CD4-positive, alpha-beta memory T cell (primary cell): ENCODE measurements at regions of chr19 and their contacts with region 1.

Region 1: DNA sequence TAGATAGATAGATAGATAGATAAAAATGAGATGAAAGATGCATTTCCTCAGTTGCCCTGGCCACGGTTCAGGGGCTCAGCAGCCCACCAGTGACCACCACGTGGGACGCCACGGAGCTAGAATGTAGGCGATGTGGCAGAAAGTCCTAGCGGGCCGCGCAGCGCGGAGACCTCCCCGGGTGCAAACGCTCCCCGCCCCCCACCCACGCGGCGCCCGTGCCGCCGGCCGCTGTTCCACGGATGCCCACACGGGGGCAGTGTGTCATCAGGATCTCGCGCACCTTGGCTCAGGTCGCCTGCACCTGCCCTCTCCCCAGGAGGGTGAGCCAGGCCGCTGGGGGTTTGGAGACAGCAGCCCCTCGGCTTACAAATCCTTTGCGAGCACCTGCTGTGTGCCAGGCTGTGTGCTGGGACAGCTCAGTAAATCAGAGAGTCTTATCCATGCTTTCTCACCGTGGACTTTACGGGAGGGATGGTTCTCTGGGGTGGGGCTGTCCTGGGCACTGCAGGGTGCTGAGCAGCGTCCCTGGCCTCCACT is 13.7 kb upstream of the TLE5 start:
- DNase-seq: peak; percentile 65 to 76 (median 66)
- H3K4me3 ChIP-seq: no peak overlapping the region
- H3K4me3 Mint-ChIP-seq: peak overlapping the region in 2 of 8 donors; percentile 41 to 58
- H3K27ac ChIP-seq: no peak overlapping the region
- H3K27ac Mint-ChIP-seq: peak overlapping the region in 2 of 7 donors; percentile 43 to 68
- H3K4me1 ChIP-seq: peaks cover 7% of the 10 kb centered on the region
- H3K4me1 Mint-ChIP-seq: peaks cover 0 to 10% (median 3%) of the 10 kb centered on the region in 4 donors
- H3K27me3 ChIP-seq: no peaks in the 10 kb centered on the region
- H3K27me3 Mint-ChIP-seq: no peaks in the 10 kb centered on the region

Region 2: DNA sequence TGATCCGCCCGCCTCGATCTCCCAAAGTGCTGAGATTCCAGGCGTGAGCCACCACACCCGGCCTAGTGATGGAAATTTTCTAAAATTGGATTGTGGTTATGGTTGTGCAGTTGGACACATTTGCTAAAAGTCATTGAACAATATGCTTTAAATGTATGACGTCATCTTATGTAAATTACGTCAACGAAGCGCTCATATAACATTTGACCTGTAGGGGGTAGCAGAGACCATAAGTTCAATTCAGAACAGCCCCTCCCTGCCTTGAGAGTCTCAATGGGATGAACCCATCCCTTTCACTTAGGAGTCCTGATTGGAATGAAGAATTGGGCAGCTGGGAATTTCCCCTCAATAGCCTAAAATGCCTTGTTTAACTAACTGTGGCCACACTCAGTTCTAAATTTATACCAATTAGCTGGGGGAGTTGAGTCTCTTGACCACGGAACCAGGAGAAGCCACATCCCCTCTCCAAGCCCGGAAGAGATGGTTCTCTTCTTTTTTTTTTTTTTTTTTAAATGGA is 113.9 kb before region 1 on chr19:
- CTCF ChIA-PET with region 1: interaction called, 9 read pairs
- POLR2A ChIA-PET with region 1: no interaction called
- intact Hi-C with region 1: loop called (anchors 1 kb)
- DNase-seq: peak; percentile 72 to 80 (median 77)
- H3K4me3 ChIP-seq: no peak overlapping the region
- H3K4me3 Mint-ChIP-seq: peak overlapping the region in 2 of 8 donors; percentile 16 to 17
- H3K27ac ChIP-seq: no peak overlapping the region
- H3K27ac Mint-ChIP-seq: peak overlapping the region; percentile 48 to 92 (median 85)
- H3K4me1 ChIP-seq: no peaks in the 10 kb centered on the region
- H3K4me1 Mint-ChIP-seq: peaks cover 4 to 6% (median 5%) of the 10 kb centered on the region in 4 donors
- H3K27me3 ChIP-seq: no peaks in the 10 kb centered on the region
- H3K27me3 Mint-ChIP-seq: no peaks in the 10 kb centered on the region

Region 3: DNA sequence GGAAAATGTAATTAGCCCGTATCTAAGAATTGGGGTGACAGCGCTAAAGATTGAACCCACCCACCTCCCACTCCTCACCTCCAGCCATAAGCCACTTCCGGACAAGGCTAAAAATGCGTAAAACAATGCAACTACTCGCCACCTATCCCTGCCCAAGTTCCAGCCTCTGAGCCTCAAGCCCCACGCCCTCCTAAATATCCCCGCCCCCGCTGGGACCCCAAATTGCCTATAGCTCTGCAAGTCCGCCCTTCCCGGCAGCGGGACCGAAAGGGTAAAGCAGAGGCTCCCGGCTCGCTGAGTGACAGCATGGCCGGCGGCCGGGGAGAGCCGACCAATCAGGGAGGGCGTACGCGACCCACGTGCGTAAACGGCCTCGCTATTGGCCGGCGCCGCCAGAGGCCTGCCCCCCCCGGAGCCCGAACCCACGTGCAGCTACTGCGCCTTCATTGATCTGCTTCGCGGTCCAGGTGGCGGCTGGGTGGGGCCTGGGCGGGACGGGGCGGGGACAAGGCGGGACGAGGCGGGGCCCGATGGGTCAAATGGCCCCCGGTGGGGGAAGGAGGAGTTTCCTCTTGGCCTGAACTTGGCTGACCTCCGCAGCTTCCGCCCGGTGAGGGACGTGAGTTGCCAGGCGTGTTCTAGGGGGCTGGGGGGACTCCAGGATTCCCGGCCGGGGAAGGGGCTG is 98.8 kb before region 1 on chr19 and contains the start of gene TLE6:
- CTCF ChIA-PET with region 1: interaction called, 12 read pairs
- POLR2A ChIA-PET with region 1: interaction called, 3 read pairs
- intact Hi-C with region 1: no loop called
- DNase-seq: peak; percentile 92 to 94 (median 93)
- H3K4me3 ChIP-seq: peak within 1 kb of the TSS; percentile 54 to 90
- H3K4me3 Mint-ChIP-seq: peak within 1 kb of the TSS; percentile 90 to 99 (median 94)
- H3K27ac ChIP-seq: peak within 1 kb of the TSS; percentile 17
- H3K27ac Mint-ChIP-seq: peak within 1 kb of the TSS; percentile 68 to 97 (median 90)
- H3K4me1 ChIP-seq: peaks cover 13% of the 10 kb centered on the region
- H3K4me1 Mint-ChIP-seq: peaks cover 6 to 19% (median 14%) of the 10 kb centered on the region in 4 donors
- H3K27me3 ChIP-seq: no peaks in the 10 kb centered on the region
- H3K27me3 Mint-ChIP-seq: peaks cover 0 to 6% of the 10 kb centered on the region in 2 donors
- total RNA-seq, gene TLE6: not detected

Region 4: GRCh38 chr19:3053218-3053699 is 22.7 kb before region 1 on chr19:
- CTCF ChIA-PET with region 1: interaction called, 10 read pairs
- POLR2A ChIA-PET with region 1: interaction called, 10 read pairs
- intact Hi-C with region 1: no loop called
- DNase-seq: no peak
- H3K4me3 ChIP-seq: no peak overlapping the region
- H3K4me3 Mint-ChIP-seq: no peak overlapping the region
- H3K27ac ChIP-seq: no peak overlapping the region
- H3K27ac Mint-ChIP-seq: peak overlapping the region in 1 of 7 donors; percentile 78
- H3K4me1 ChIP-seq: peaks cover 39% of the 10 kb centered on the region
- H3K4me1 Mint-ChIP-seq: peaks cover 17 to 34% (median 24%) of the 10 kb centered on the region in 4 donors
- H3K27me3 ChIP-seq: no peaks in the 10 kb centered on the region
- H3K27me3 Mint-ChIP-seq: no peaks in the 10 kb centered on the region

Region 5: GRCh38 chr19:3100081-3100864 is 24.3 kb after region 1 on chr19:
- CTCF ChIA-PET with region 1: interaction called, 111 read pairs
- POLR2A ChIA-PET with region 1: no interaction called
- intact Hi-C with region 1: loop called (anchors 1 kb)
- DNase-seq: no peak
- H3K4me3 ChIP-seq: no peak overlapping the region
- H3K4me3 Mint-ChIP-seq: peak overlapping the region in 2 of 8 donors; percentile 20 to 86
- H3K27ac ChIP-seq: no peak overlapping the region
- H3K27ac Mint-ChIP-seq: no peak overlapping the region
- H3K4me1 ChIP-seq: peaks cover 37% of the 10 kb centered on the region
- H3K4me1 Mint-ChIP-seq: peaks cover 16 to 34% (median 25%) of the 10 kb centered on the region in 4 donors
- H3K27me3 ChIP-seq: peaks cover 3% of the 10 kb centered on the region
- H3K27me3 Mint-ChIP-seq: peaks cover 5 to 17% of the 10 kb centered on the region in 2 donors

Region 6: DNA sequence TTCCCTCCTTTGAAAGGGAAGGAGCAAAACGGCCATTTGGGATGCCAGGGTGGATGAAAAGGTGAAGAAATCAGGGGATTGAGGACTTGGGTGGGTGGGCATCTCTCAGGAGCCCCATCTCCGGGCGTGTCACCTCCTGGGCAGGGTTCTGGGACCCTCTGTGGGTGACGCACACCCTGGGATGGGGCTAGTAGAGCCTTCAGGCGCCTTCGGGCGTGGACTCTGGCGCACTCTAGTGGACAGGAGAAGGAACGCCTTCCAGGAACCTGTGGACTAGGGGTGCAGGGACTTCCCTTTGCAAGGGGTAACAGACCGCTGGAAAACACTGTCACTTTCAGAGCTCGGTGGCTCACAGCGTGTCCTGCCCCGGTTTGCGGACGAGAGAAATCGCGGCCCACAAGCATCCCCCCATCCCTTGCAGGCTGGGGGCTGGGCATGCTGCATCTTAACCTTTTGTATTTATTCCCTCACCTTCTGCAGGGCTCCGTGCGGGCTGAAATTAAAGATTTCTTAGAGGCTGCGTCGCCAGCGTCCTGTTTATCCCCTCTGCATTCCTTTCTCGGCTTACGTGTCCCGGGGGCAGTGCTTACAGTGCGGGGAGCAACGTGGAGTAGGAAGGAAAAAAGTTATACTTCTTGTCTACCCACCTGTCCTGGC is 87.4 kb after region 1 on chr19:
- CTCF ChIA-PET with region 1: interaction called, 10 read pairs
- POLR2A ChIA-PET with region 1: no interaction called
- intact Hi-C with region 1: loop called (anchors 1 kb)
- DNase-seq: peak; percentile 69 to 73 (median 71)
- H3K4me3 ChIP-seq: no peak overlapping the region
- H3K4me3 Mint-ChIP-seq: peak overlapping the region in 3 of 8 donors; percentile 5 to 55 (median 55)
- H3K27ac ChIP-seq: no peak overlapping the region
- H3K27ac Mint-ChIP-seq: peak overlapping the region; percentile 62 to 92 (median 77)
- H3K4me1 ChIP-seq: peaks cover 11% of the 10 kb centered on the region
- H3K4me1 Mint-ChIP-seq: peaks cover 9 to 30% (median 15%) of the 10 kb centered on the region in 4 donors
- H3K27me3 ChIP-seq: no peaks in the 10 kb centered on the region
- H3K27me3 Mint-ChIP-seq: no peaks in the 10 kb centered on the region

Region 7: DNA sequence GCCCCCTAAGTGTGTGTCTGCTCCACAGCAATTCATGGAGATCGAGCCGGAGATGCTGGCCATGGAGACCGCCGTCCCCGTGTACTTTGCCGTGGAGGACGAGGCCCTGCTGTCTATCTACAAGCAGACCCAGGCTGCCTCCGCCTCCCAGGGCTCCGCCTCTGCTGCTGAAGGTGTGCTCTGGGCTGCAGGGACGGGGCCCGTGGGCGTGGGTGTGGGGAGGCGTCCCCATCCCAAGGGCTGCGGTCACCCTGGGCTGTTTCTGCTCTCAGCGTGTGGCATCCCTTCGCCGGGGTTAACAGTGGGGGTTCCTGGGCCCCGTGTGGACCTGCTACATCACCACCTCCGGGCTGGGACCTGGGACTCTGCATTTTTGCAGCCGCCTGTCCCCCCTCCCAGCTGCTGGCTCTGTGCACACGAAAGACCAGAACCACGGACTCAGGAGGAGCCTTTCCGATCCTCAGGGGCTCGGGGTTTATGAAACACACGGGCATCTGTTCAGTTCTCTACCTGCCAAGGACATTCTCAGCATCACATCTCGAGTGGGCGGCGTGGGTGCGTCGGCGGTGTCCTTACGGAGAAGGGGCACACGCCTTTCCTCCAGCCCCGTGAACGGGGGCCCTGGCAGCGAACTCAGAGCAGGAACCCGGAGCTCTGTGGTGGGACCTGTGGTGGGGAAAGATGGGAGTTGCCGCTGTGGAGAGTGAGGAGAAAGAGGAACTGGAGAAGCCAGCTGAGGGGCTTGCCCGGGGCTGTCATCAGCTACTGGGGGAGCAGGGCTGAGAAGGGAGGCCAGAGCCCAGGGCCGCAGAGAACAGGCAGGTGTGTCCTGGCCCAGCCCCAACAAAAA is 117.5 kb after region 1 on chr19:
- CTCF ChIA-PET with region 1: no interaction called
- POLR2A ChIA-PET with region 1: no interaction called
- intact Hi-C with region 1: no loop called
- DNase-seq: no peak
- H3K4me3 ChIP-seq: no peak overlapping the region
- H3K4me3 Mint-ChIP-seq: no peak overlapping the region
- H3K27ac ChIP-seq: no peak overlapping the region
- H3K27ac Mint-ChIP-seq: no peak overlapping the region
- H3K4me1 ChIP-seq: peaks cover 9% of the 10 kb centered on the region
- H3K4me1 Mint-ChIP-seq: peaks cover 10 to 15% (median 10%) of the 10 kb centered on the region in 4 donors
- H3K27me3 ChIP-seq: no peaks in the 10 kb centered on the region
- H3K27me3 Mint-ChIP-seq: no peaks in the 10 kb centered on the region

Region 8: GRCh38 chr19:3275583-3276340 is 199.8 kb after region 1 on chr19:
- CTCF ChIA-PET with region 1: no interaction called
- POLR2A ChIA-PET with region 1: no interaction called
- intact Hi-C with region 1: no loop called
- DNase-seq: peak; percentile 90 to 97 (median 92)
- H3K4me3 ChIP-seq: peak overlapping the region; percentile 47 to 78
- H3K4me3 Mint-ChIP-seq: peak overlapping the region; percentile 80 to 93 (median 86)
- H3K27ac ChIP-seq: peak overlapping the region; percentile 23
- H3K27ac Mint-ChIP-seq: peak overlapping the region; percentile 70 to 93 (median 86)
- H3K4me1 ChIP-seq: peaks cover 15% of the 10 kb centered on the region
- H3K4me1 Mint-ChIP-seq: peaks cover 7 to 22% (median 16%) of the 10 kb centered on the region in 4 donors
- H3K27me3 ChIP-seq: no peaks in the 10 kb centered on the region
- H3K27me3 Mint-ChIP-seq: peaks cover 12% of the 10 kb centered on the region in 2 donors